BJ (cell line): ENCODE measurements at regions of chr7 and their contacts with region 1.

Region 1: GRCh38 chr7:46945328-46945727 is 636.6 kb downstream of the TNS3 start:
- DNase-seq: no peak
- H3K4me3 ChIP-seq: no peak overlapping the region
- H3K27me3 ChIP-seq: no peaks in the 10 kb centered on the region
- CTCF ChIP-seq: no peak

Region 2: GRCh38 chr7:46927136-46927810 is 18.1 kb before region 1 on chr7:
- CTCF ChIA-PET with region 1: no interaction called
- POLR2A ChIA-PET with region 1: interaction called, 18 read pairs
- DNase-seq: no peak
- H3K4me3 ChIP-seq: no peak overlapping the region
- H3K27me3 ChIP-seq: no peaks in the 10 kb centered on the region
- CTCF ChIP-seq: no peak

Region 3: GRCh38 chr7:46982928-46983327 is 37.6 kb after region 1 on chr7:
- CTCF ChIA-PET with region 1: no interaction called
- POLR2A ChIA-PET with region 1: no interaction called
- DNase-seq: no peak
- H3K4me3 ChIP-seq: no peak overlapping the region
- H3K27me3 ChIP-seq: no peaks in the 10 kb centered on the region
- CTCF ChIP-seq: no peak